ENCODE measurements at regions of chr4 and their contacts with region 1.

Region 1: GRCh38 chr4:55853484-55854046 is at the start of gene EXOC1:
- DNase-seq: peak; percentile 99
- ATAC-seq: peak; percentile 100
- total RNA-seq, gene EXOC1: 22.4 to 22.5 TPM

Region 2: GRCh38 chr4:55546756-55547465 is 306.7 kb before region 1 on chr4 and contains the start of gene CLOCK:
- intact Hi-C with region 1: loop called in 1 of 2 experiments (anchors 10 kb)
- DNase-seq: peak; percentile 92
- ATAC-seq: peak; percentile 90 to 93
- total RNA-seq, gene CLOCK: 26.8 to 33.5 TPM

Region 3: DNA sequence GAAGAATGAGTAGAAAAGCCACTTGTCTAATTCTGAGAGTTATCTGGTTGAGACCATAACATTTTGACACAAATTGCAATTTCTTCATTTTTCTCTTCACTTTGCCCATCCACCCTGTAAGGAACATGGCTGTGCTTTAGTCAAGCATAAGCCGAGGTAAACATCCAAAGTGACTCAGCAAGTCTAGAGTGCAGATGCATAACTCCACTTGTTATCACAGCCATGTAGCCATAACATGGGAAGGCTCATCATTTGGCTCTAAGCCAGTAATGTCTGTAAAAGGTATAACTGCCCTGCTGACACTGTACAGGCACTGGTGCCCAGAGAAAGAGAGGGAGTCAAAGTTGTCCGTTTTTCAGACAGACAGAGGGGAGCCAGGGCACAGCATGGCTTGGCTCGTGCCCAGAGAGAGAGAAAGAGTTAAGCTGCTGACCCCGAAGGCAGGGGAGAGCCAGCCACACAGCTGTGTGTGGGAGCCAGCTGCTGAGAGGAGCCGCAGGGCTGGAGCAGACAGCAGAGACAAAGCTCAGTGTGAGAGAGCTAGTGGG is 110.8 kb before region 1 on chr4:
- intact Hi-C with region 1: no loop called
- DNase-seq: no peak
- ATAC-seq: peak in 1 of 2 donors; percentile 38

Region 4: DNA sequence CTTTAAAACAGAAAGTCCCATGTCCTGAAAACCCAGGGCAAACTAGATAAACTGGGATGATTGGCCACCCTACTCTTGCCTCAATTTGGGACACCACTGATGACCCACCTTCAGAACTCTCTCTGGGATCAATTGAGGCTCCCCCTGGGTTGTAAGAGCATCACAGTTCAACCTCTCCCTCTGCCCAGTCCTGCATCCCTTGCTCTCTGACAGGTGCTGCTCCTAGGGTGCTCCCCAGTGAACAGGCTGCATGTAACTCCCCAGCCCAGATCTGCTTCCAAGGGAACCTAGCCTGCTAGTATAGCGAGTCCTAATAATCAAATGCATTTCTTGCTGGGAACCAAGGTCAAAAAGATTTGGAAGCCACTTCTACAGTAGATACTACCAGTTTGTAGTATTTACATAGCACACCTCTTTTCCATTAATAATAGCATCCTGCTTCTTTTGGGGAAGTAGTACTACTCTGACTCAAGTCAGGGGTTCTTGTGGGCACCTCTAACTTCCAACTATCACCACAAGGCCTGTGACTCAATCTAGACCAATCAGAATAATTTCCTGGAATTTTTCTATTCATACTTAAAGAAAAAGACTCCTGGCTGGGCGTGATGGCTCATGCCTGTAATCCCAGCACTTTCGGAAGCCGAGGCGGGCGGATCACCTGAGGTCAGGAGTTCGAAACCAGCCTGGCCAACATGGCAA is 1010.0 kb after region 1 on chr4:
- intact Hi-C with region 1: no loop called
- DNase-seq: no peak
- ATAC-seq: no peak